Common myeloid progenitor, CD34-positive (primary cell): ENCODE measurements at regions of chr2 and their contacts with region 1.

Region 1: DNA sequence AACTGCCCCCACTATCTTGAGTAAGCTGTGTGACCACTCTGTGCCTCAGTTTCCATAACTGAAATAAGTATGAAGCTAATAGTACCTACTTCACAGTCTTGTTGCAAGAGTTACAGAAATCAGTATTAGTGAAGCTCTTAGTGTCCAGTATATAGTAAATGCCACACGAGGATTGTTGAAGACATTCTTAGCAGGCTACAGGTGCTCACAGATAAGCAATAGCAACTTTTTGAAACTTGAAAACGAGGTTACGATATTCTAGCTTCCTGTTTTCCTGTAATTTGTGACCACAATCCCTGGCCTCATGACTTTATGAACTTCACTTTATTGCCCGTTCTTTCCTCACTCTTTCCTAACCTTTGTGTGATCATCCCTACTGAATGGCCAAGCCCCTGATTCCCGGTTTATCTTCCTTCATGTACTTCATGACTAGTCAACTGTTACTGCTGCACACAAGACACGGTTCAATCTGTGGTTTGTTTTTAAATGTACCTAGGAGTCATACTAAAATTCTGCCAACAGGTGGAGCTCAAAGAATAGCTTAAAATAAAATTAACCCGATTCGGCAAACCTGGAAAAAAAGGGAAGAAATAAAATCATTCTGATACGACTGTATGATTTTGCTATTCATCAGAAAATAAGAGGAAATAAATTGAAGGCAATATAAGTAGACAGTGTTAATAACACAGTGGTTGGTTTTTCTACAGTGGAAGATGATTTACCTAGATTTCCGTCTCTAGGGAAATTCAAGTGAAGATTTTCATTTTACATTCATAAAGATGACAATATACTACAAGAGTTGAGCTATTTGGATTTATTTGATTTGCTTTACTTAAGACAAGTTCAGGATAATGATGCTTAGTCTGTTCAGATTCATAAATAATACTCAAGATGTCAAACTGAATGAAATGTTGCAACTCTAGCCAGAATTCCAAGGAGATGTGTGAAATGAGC is 38.1 kb upstream of the STAT1 start:
- DNase-seq: peak; percentile 76 to 88 (median 85)
- H3K4me3 ChIP-seq: peak overlapping the region in 6 of 7 experiments; percentile 19 to 62 (median 36)
- H3K27ac ChIP-seq: no peak overlapping the region
- H3K4me1 ChIP-seq: peaks cover 9 to 27% (median 18%) of the 10 kb centered on the region in 4 experiments
- H3K27me3 ChIP-seq: no peaks in the 10 kb centered on the region

Region 2: DNA sequence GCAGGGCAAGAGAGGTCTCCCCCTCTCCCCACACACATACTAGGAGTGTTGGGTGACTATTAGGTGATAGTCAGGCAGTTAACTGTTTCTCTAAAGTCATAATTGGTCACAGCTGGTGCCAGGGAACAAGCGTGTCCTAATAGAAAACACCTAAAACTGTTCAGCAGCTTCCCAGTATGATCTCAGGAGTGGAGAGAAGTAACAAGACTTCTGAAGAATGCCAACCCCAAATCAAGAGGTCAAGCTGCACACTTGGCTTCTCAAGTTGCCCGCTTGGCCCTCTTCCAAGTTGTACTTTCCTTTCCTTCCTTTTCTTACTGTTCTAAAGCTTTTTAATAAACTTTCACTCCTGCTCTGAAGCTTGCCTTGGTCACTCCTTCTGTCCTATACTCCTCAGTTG is 15.7 kb before region 1 on chr2:
- CTCF ChIA-PET with region 1: interaction called, 24 read pairs
- POLR2A ChIA-PET with region 1: no interaction called
- DNase-seq: no peak
- H3K4me3 ChIP-seq: no peak overlapping the region
- H3K27ac ChIP-seq: no peak overlapping the region
- H3K4me1 ChIP-seq: peaks cover 0 to 30% (median 9%) of the 10 kb centered on the region in 4 experiments
- H3K27me3 ChIP-seq: no peaks in the 10 kb centered on the region

Region 3: GRCh38 chr2:191041418-191042161 is 10.5 kb before region 1 on chr2:
- CTCF ChIA-PET with region 1: interaction called, 24 read pairs
- POLR2A ChIA-PET with region 1: no interaction called
- DNase-seq: no peak
- H3K4me3 ChIP-seq: no peak overlapping the region
- H3K27ac ChIP-seq: no peak overlapping the region
- H3K4me1 ChIP-seq: peaks cover 0 to 16% (median 9%) of the 10 kb centered on the region in 4 experiments
- H3K27me3 ChIP-seq: no peaks in the 10 kb centered on the region

Region 4: DNA sequence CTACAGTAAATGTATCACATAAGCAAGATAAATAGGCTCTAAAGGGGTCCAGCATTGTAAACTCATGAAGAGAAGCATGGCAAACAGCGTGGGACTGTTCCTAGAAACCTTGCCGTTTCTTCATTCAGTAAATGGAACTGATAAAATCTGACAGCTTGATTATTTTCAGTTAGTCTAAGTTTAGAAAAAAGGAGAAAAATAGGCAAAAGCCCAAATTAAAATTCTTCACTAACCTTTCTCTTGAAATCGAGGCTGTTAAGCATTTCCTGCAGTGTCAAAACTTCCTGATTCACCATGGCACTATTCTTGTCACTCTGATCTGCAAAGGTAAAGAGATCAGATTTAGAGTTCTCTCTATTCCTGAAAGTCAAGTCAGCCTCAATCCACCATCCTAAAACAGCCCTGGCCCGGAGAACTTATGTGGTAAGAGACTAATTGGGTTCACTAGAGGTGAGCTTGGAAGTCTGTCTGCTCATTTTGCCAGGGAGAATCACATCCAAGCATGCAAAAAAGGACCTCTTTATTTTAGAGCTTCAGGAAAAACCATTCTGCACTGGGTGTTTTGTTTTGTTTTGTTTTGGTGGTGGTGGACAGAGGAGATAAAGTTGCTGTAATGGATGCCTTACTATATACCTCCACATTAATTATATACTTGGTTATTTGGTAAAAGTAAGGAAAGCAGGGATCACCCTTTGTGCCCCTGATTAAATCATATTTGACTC is 14.3 kb after region 1 on chr2:
- CTCF ChIA-PET with region 1: interaction called, 50 read pairs
- POLR2A ChIA-PET with region 1: interaction called, 3 read pairs
- DNase-seq: peak in 2 of 3 donors; percentile 9 to 25
- H3K4me3 ChIP-seq: peak overlapping the region in 5 of 7 experiments; percentile 39 to 74 (median 47)
- H3K27ac ChIP-seq: peak overlapping the region; percentile 29 to 54
- H3K4me1 ChIP-seq: peaks cover 4 to 64% (median 28%) of the 10 kb centered on the region in 4 experiments
- H3K27me3 ChIP-seq: no peaks in the 10 kb centered on the region

Region 5: GRCh38 chr2:191150600-191151330 is 98.7 kb after region 1 on chr2 and contains the start of gene STAT4:
- CTCF ChIA-PET with region 1: interaction called, 250 read pairs
- POLR2A ChIA-PET with region 1: no interaction called
- DNase-seq: peak; percentile 88 to 92 (median 90)
- H3K4me3 ChIP-seq: peak within 1 kb of the TSS; percentile 57 to 93 (median 87)
- H3K27ac ChIP-seq: peak within 1 kb of the TSS; percentile 62 to 81
- H3K4me1 ChIP-seq: peaks cover 0 to 38% (median 16%) of the 10 kb centered on the region in 4 experiments
- H3K27me3 ChIP-seq: no peaks in the 10 kb centered on the region

Region 6: GRCh38 chr2:191165176-191165643 is 113.1 kb after region 1 on chr2:
- CTCF ChIA-PET with region 1: interaction called, 250 read pairs
- POLR2A ChIA-PET with region 1: no interaction called
- DNase-seq: peak; percentile 41 to 74 (median 64)
- H3K4me3 ChIP-seq: peak overlapping the region in 1 of 7 experiments; percentile 2
- H3K27ac ChIP-seq: no peak overlapping the region
- H3K4me1 ChIP-seq: no peaks in the 10 kb centered on the region
- H3K27me3 ChIP-seq: no peaks in the 10 kb centered on the region

Region 7: GRCh38 chr2:191521608-191522208 is 469.6 kb after region 1 on chr2:
- CTCF ChIA-PET with region 1: interaction called, 15 read pairs
- POLR2A ChIA-PET with region 1: no interaction called
- DNase-seq: peak; percentile 29 to 59 (median 46)
- H3K4me3 ChIP-seq: no peak overlapping the region
- H3K27ac ChIP-seq: no peak overlapping the region
- H3K4me1 ChIP-seq: no peaks in the 10 kb centered on the region
- H3K27me3 ChIP-seq: no peaks in the 10 kb centered on the region